WTC11 (cell line): ENCODE measurements at regions of chr1 and their contacts with region 1.

Region 1: DNA sequence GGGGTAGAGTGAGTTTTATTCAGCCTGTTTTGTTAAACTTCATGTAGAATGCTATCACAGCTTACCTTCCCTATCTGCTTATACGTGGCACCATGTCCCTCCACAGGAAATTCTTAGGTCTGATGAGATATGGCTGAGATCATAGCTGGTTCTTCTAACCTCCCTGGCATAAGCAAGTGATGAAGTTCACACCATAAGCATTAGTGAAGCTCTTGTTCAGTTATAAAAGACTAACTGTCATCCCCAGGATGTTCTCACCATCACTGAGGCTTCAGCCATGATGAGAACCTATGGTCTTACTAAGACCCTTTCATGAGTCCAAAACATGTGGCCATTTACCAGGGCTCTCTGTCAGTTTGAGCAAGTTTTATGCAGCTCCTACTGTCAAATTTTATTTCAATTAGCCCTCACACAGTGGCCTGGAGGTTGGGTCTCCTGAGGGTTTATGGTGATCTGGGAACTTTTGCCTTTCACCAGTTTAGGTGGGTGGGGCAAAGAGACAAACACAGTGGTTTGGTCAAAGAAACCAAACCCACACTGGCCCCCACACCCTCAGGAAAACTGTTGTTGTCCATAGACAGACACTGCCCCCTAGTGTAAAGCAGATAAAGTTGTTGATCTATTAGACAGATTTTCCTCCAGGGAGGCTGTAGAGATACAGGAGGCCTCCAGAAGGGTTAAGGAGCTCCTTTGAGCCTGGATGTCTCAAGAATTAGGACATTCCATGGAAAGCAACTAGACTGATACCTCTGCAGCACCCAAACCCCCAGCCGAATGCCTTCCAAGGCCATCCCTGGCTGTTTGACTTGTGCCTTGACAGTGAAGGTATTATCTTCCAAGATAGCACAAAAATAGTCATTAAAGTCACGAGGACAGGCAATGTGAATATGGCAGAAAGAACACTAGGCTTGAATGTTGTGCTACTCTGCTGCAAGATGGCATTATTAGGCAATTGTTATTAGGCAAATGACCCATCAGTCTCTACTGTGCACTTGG is 5.0 kb downstream of the SLC22A15 start:
- DNase-seq: peak; percentile 41
- ATAC-seq: peak; percentile 55
- H3K4me3 Mint-ChIP-seq: no peak overlapping the region
- H3K27ac Mint-ChIP-seq: no peak overlapping the region
- H3K4me1 Mint-ChIP-seq: peaks cover 34% of the 10 kb centered on the region
- H3K27me3 Mint-ChIP-seq: no peaks in the 10 kb centered on the region
- CTCF ChIP-seq: peak; percentile 73

Region 2: DNA sequence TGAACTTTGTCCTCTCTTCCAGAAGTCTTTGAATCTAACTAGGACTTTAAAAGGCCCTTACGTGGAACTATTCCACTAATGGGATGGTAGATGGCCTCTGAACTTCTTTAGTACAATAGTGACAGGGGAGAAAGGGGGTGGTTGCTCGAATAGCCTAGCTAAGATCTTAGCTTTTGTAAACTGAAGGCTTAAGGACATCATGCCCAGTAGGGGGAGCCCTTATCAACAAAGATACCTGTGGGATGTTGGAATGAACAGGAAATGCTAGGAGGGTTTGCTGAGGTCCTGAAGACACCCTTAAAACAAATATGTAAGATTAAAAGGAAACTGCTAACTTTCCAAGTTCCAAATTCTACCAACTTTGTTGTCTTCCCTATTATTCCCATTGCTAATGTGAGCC is 173.6 kb before region 1 on chr1:
- CTCF ChIA-PET with region 1: interaction called, 15 read pairs
- POLR2A ChIA-PET with region 1: no interaction called
- DNase-seq: peak; percentile 48
- ATAC-seq: peak; percentile 92
- H3K4me3 Mint-ChIP-seq: no peak overlapping the region
- H3K27ac Mint-ChIP-seq: no peak overlapping the region
- H3K4me1 Mint-ChIP-seq: peaks cover 22% of the 10 kb centered on the region
- H3K27me3 Mint-ChIP-seq: no peaks in the 10 kb centered on the region
- CTCF ChIP-seq: peak; percentile 60

Region 3: DNA sequence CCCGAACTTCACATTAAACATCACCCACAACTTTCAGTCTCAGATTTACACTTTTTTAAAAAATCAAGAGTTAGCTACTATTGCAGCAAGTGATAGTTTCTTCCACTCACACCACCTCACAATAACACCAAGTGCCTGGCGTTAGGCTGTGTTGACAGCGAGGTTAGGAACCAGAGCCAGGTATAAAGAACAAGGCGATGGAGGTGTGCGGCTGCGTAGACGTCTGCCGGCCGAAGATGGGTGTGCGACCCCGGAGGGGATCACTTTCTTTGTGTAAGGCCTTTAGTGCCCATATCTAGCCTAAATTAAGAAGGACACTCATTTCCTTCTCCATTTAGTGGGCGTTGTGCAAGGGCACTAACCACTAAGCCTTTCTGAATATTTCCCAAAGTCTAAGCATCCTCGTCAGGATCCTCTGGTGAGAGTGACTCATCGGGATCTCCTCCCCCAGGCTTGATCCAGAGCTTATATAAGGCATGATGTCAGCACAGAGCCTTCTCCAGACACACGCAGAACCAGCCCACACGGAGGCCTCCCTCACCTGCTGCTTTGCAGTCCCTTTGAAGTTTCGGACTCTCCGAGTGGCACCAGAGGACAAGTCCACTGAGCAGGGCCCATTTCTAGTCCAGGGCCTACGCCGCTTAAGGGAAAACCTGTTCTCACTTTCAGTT is 152.1 kb before region 1 on chr1:
- CTCF ChIA-PET with region 1: interaction called, 16 read pairs
- POLR2A ChIA-PET with region 1: interaction called, 3 read pairs
- DNase-seq: no peak
- ATAC-seq: no peak
- H3K4me3 Mint-ChIP-seq: peak overlapping the region; percentile 65
- H3K27ac Mint-ChIP-seq: 0 out of 2 replicates have a peak overlapping the region, but pooled peaks have one; percentile 6
- H3K4me1 Mint-ChIP-seq: peaks cover 54% of the 10 kb centered on the region
- H3K27me3 Mint-ChIP-seq: peaks cover 17% of the 10 kb centered on the region
- CTCF ChIP-seq: no peak

Region 4: DNA sequence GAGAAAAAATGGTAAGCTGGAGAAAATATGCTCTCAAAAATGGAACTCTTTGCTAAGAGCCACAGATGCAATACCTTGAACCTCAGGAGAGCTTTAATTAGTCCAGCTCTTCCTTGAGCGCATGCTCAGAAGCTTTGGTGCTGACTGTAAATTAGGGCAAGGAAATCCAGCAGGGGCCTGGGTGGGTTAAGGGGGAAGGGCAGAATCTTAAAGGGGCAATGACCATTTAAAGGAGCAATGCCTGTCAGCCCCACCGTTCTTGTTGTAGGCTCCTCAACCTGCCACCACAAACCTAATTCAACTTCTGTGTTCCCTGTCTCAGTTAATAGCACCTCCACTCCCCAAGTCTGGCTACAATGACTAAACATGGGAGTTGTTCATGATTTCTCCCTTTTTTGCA is 11.8 kb before region 1 on chr1:
- CTCF ChIA-PET with region 1: interaction called, 15 read pairs
- POLR2A ChIA-PET with region 1: no interaction called
- DNase-seq: peak; percentile 74
- ATAC-seq: peak; percentile 100
- H3K4me3 Mint-ChIP-seq: no peak overlapping the region
- H3K27ac Mint-ChIP-seq: peak overlapping the region; percentile 7; the same call in 1 of the 2 replicates
- H3K4me1 Mint-ChIP-seq: peaks cover 22% of the 10 kb centered on the region
- H3K27me3 Mint-ChIP-seq: no peaks in the 10 kb centered on the region
- CTCF ChIP-seq: no peak

Region 5: DNA sequence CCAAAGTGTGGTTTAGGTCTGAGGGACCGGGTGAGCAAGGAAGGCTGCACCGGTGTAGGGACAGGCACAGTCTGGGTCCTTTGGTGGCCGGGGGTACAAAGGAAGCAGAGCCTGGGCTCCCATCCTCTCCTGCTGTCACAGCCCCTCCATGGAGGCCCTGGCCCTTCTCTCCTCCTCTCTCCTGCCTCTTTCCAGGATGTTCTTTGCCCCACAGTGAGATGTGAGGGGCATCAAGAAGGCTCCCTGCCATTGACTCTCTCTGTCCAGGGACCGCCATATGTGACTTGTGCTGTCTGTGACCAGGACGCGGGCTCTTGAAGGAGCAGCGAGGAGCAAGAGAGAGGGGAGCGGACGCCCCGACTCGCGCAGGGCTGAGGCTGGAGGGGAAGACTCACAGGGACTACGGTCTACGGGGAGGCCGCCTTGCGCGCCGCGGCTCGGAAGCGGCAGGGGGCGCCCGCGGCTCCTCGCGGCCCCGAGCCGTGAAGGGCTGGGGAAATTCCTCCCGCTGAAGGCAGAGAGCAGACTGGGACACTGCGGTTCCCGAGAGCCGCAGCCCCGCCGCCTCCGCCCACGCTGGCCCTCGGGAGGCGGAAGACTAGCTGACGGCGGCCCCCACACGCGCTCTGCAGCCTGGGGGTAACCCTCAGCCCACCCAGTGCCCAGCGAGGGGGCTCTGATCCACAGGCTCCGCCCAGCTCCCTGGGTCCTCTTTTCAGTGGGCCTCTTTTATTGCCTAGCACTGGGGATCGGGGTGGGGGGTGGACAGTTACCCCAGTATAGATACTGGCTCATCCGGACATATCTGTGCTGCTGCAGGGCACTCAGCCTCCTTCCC is 170.7 kb after region 1 on chr1:
- CTCF ChIA-PET with region 1: no interaction called
- POLR2A ChIA-PET with region 1: no interaction called
- DNase-seq: peak; percentile 78
- ATAC-seq: peak; percentile 95
- H3K4me3 Mint-ChIP-seq: peak overlapping the region; percentile 63
- H3K27ac Mint-ChIP-seq: no peak overlapping the region
- H3K4me1 Mint-ChIP-seq: peaks cover 8% of the 10 kb centered on the region
- H3K27me3 Mint-ChIP-seq: peaks cover 23% of the 10 kb centered on the region
- CTCF ChIP-seq: peak; percentile 74